GM10248 (cell line): ENCODE measurements at regions of chr11 and their contacts with region 1.

Region 1: DNA sequence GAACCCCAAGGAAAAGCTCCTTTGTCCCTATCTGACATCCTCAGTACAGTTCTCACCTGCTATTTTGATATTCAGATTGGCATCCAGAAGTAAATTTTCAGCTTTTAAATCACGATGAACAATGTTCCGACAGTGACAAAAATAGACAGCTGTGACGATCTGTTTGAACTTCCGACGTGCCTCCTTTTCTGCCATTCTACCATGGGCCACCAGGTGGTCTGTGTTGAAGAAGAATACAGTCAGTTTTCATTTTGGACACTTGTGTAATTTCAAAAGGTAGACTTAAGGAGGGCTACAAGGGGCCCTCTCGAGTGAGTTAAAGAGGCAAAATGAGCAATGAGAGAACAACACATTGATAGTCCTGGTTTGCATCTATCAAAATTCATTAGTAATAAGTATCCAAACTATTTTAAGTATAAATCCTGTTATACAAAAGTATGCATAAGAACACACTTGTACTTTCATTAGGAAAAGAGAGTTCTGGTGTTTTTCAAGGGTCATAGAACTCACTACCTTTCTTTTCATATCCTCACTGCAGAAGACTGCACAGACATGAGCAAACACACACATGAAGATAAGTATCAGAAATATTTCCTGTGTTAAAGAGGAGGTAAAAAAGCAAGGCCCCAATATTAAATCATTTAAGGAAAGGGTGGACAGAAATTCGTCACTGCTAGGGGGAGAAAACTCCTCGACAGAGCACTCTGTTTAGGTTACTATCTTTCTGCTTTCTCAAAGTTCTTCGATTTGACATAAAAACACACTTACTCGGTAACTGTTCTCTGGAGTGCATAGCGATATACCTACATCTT is 89.9 kb upstream of the APOA1 start:
- DNase-seq: no peak
- CTCF ChIP-seq: no peak

Region 2: DNA sequence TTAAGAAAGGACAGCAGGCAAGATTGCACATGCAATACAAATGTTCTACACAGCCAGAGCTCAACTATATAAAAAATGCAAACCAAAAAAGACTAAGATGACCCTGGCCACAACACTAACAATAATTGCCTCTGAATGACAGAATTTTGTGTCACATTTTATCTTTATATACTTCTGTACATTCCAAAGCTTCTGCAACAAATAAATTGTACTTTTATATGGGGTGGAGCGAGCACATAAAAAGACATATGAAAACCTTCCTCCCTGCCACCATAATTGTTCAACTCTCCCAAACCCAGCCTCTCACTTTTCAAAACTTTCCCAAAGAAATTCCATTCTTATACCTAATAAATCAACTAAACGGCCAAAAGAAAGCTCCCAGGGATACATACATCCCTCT is 165.2 kb before region 1 on chr11:
- CTCF ChIA-PET with region 1: no interaction called
- POLR2A ChIA-PET with region 1: no interaction called
- DNase-seq: no peak
- CTCF ChIP-seq: no peak

Region 3: GRCh38 chr11:117098269-117099232 is 171.2 kb after region 1 on chr11 and contains the start of gene SIK3:
- CTCF ChIA-PET with region 1: interaction called, 11 read pairs
- POLR2A ChIA-PET with region 1: no interaction called
- DNase-seq: peak; percentile 99
- CTCF ChIP-seq: peak; percentile 68